A673 (cell line): ENCODE measurements at regions of chr5 and their contacts with region 1.

Region 1: GRCh38 chr5:126757713-126758357 is 19.1 kb upstream of the LMNB1 start:
- DNase-seq: peak; percentile 51
- H3K4me3 ChIP-seq: no peak overlapping the region
- H3K27ac ChIP-seq: peak overlapping the region; percentile 12
- H3K4me1 ChIP-seq: peaks cover 31% of the 10 kb centered on the region
- H3K27me3 ChIP-seq: no peaks in the 10 kb centered on the region
- CTCF ChIP-seq: no peak

Region 2: DNA sequence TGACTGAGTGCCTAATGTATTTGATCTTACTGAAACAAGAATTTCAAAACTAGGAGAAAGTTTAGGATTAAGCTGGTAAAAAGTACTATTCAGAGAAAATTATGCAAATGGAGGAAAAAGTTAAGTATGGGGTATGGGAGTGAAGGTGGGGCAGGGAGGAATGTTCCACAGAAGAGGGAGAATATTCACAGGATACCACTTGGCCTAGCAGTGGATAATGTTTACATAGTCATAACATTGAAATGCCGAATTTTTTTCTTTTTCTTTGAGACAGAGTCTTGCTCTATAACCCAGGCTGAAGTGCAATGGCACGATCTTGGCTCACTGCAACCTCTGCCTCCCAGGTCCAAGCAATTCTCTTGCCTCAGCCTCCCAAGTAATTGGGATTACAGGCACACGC is 42.1 kb before region 1 on chr5:
- CTCF ChIA-PET with region 1: no interaction called
- POLR2A ChIA-PET with region 1: interaction called, 11 read pairs
- intact Hi-C with region 1: no loop called
- DNase-seq: no peak
- H3K4me3 ChIP-seq: no peak overlapping the region
- H3K27ac ChIP-seq: no peak overlapping the region
- H3K4me1 ChIP-seq: no peaks in the 10 kb centered on the region
- H3K27me3 ChIP-seq: no peaks in the 10 kb centered on the region
- CTCF ChIP-seq: no peak